Mammary epithelial cell (primary cell): ENCODE measurements at regions of chr13 and their contacts with region 1.

Region 1: GRCh38 chr13:107258599-107259187 is 690.8 kb upstream of the ARGLU1 start:
- DNase-seq: peak; percentile 33
- H3K4me3 ChIP-seq: no peak overlapping the region
- H3K27ac ChIP-seq: peak overlapping the region; percentile 87
- H3K4me1 ChIP-seq: peaks cover 11% of the 10 kb centered on the region
- H3K27me3 ChIP-seq: no peaks in the 10 kb centered on the region
- CTCF ChIP-seq: no peak

Region 2: DNA sequence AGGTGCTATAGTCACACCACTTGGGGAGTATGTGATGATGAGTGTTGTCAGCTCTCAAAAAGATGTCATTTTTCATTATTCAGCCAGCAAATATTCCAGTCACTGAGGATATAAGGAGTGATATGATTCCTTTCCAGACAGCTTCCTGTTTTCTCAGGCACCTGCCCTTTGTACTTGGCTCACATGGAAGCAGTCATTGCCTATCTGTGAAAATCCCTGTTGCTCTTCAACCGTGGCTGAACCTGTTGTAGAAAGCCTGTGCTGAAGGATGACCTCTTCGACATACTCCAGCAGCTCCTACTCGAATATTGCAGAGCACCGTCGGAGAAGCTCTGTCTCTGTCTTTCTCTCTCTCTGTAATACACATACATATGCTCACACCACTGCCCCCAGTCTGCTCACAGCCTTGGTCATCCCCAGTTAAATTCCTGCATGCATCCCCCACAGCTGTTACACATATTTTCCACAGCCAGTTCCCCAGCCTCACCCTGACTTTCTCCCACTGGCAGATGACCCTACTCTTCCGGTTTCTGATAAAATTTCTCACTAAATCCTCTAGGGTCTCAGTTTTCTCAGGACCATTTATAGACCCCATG is 486.6 kb before region 1 on chr13:
- CTCF ChIA-PET with region 1: no interaction called
- dilution Hi-C with region 1: no loop called
- in situ Hi-C with region 1: no loop called
- intact Hi-C with region 1: no loop called
- DNase-seq: no peak
- H3K4me3 ChIP-seq: no peak overlapping the region
- H3K27ac ChIP-seq: no peak overlapping the region
- H3K4me1 ChIP-seq: no peaks in the 10 kb centered on the region
- H3K27me3 ChIP-seq: no peaks in the 10 kb centered on the region
- CTCF ChIP-seq: no peak

Region 3: DNA sequence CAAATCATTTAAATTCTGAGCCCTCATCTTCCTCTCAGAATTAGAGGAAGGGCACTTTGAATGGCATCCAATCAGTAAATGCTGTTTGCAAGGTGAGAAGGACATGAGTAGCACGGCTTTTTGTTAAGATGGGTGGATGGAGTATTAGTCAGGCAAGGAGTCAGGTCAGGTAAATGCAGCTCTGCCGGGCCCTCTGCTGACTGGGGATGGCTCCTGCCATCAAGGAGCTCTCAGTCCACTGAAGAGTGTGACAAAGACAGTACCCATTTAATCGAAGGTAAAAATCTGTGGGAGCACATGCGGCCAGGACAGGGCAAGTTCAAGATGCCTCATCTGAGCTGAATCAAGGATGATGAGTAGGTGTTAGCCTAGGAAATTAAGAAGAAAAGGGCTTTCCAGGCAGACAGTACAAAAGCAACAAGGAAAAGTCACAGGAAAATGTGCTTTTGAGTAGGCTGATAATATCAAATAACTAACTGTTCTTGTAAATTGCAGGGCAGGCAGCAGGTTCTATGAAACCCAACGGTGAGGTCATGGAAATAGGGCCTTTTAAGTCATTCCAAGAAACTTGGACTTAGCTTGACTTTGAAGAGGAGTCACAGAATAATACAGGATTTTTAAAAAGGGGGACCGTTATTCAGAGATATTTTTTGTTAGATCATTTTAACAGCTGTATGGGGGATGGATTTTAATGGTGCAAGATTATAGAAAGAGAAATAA is 20.3 kb before region 1 on chr13:
- CTCF ChIA-PET with region 1: no interaction called
- dilution Hi-C with region 1: no loop called
- in situ Hi-C with region 1: no loop called
- intact Hi-C with region 1: loop called (anchors 1 kb)
- DNase-seq: no peak
- H3K4me3 ChIP-seq: no peak overlapping the region
- H3K27ac ChIP-seq: no peak overlapping the region
- H3K4me1 ChIP-seq: no peaks in the 10 kb centered on the region
- H3K27me3 ChIP-seq: no peaks in the 10 kb centered on the region
- CTCF ChIP-seq: no peak

Region 4: DNA sequence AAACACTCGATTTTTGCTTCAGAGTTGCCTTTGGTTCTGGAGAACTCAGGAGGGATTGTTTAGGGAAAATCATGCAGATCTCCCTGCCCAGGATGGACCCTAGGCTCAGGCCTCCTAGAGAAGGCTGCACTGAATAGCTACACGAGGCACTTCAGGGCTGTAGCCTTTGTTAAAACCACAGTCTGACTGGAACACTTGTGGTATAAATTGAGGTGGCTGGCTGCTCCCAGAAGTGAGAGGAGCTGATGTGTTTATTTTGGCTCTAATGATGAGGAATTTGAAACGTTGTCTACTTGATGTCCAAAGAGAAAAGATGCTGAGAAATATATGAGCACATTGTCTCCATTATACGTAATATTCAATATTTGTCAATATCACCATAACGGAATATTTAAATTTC is 71.3 kb after region 1 on chr13:
- CTCF ChIA-PET with region 1: no interaction called
- dilution Hi-C with region 1: no loop called
- in situ Hi-C with region 1: no loop called
- intact Hi-C with region 1: no loop called
- DNase-seq: no peak
- H3K4me3 ChIP-seq: no peak overlapping the region
- H3K27ac ChIP-seq: no peak overlapping the region
- H3K4me1 ChIP-seq: no peaks in the 10 kb centered on the region
- H3K27me3 ChIP-seq: no peaks in the 10 kb centered on the region
- CTCF ChIP-seq: no peak

Region 5: DNA sequence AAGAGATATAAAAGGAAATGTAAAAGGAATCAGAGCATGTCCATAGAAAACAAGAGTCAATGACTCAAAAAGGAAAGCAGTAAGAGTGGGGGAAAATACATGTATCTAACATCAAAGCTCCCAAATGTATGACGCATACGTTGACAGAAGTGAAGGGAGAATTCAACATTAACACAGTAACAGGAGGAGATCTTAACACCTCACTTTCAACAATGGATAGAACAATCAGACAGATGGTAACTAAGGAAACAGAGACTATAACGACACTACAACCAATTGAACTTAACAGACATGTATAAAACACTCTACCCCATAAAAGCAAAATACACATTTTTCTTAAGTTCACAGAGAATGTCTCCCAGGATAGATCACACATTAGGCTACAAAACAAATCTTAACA is 84.1 kb after region 1 on chr13:
- CTCF ChIA-PET with region 1: no interaction called
- dilution Hi-C with region 1: loop called (anchors 5 kb)
- in situ Hi-C with region 1: no loop called
- intact Hi-C with region 1: no loop called
- DNase-seq: no peak
- H3K4me3 ChIP-seq: no peak overlapping the region
- H3K27ac ChIP-seq: no peak overlapping the region
- H3K4me1 ChIP-seq: no peaks in the 10 kb centered on the region
- H3K27me3 ChIP-seq: no peaks in the 10 kb centered on the region
- CTCF ChIP-seq: no peak